Activated T-helper 1 cell treated with anti-CD3 and anti-CD28 coated beads, Interleukin-12 subunit alpha, Interleukin-12 subunit beta, Interleukin-2, Interleukin-4 antibody, amounts not matched to agents 30 ng/mL and 10 ng/mL and 1 ng/mL, durations not matched to agents 14 hours and 24 hours and 36 hours (primary cell): ENCODE measurements at regions of chr14 and their contacts with region 1.

Region 1: GRCh38 chr14:69685716-69686115 is 74.3 kb downstream of the SUSD6 start:
- DNase-seq: peak; percentile 32
- H3K4me3 Mint-ChIP-seq: peak overlapping the region; percentile 76
- H3K27ac Mint-ChIP-seq: peak overlapping the region; percentile 94
- H3K4me1 Mint-ChIP-seq: peaks cover 90% of the 10 kb centered on the region
- H3K27me3 Mint-ChIP-seq: no peaks in the 10 kb centered on the region

Region 2: GRCh38 chr14:69637503-69638030 is 48.1 kb before region 1 on chr14:
- intact Hi-C with region 1: loop called (anchors 1 kb)
- DNase-seq: no peak
- H3K4me3 Mint-ChIP-seq: peak overlapping the region; percentile 52
- H3K27ac Mint-ChIP-seq: peak overlapping the region; percentile 96
- H3K4me1 Mint-ChIP-seq: peaks cover 76% of the 10 kb centered on the region
- H3K27me3 Mint-ChIP-seq: no peaks in the 10 kb centered on the region

Region 3: GRCh38 chr14:69643443-69644164 is 42.1 kb before region 1 on chr14:
- intact Hi-C with region 1: loop called (anchors 1 kb)
- DNase-seq: no peak
- H3K4me3 Mint-ChIP-seq: peak overlapping the region; percentile 7
- H3K27ac Mint-ChIP-seq: peak overlapping the region; percentile 83
- H3K4me1 Mint-ChIP-seq: peaks cover 72% of the 10 kb centered on the region
- H3K27me3 Mint-ChIP-seq: no peaks in the 10 kb centered on the region

Region 4: GRCh38 chr14:69660344-69661193 is 25.1 kb before region 1 on chr14:
- intact Hi-C with region 1: loop called (anchors 1 kb)
- DNase-seq: no peak
- H3K4me3 Mint-ChIP-seq: peak overlapping the region; percentile 43
- H3K27ac Mint-ChIP-seq: peak overlapping the region; percentile 85
- H3K4me1 Mint-ChIP-seq: peaks cover 87% of the 10 kb centered on the region
- H3K27me3 Mint-ChIP-seq: no peaks in the 10 kb centered on the region

Region 5: GRCh38 chr14:69715725-69716477 is 30.2 kb after region 1 on chr14:
- intact Hi-C with region 1: loop called (anchors 1 kb)
- DNase-seq: no peak
- H3K4me3 Mint-ChIP-seq: peak overlapping the region; percentile 46
- H3K27ac Mint-ChIP-seq: peak overlapping the region; percentile 92
- H3K4me1 Mint-ChIP-seq: peaks cover 94% of the 10 kb centered on the region
- H3K27me3 Mint-ChIP-seq: no peaks in the 10 kb centered on the region

Region 6: DNA sequence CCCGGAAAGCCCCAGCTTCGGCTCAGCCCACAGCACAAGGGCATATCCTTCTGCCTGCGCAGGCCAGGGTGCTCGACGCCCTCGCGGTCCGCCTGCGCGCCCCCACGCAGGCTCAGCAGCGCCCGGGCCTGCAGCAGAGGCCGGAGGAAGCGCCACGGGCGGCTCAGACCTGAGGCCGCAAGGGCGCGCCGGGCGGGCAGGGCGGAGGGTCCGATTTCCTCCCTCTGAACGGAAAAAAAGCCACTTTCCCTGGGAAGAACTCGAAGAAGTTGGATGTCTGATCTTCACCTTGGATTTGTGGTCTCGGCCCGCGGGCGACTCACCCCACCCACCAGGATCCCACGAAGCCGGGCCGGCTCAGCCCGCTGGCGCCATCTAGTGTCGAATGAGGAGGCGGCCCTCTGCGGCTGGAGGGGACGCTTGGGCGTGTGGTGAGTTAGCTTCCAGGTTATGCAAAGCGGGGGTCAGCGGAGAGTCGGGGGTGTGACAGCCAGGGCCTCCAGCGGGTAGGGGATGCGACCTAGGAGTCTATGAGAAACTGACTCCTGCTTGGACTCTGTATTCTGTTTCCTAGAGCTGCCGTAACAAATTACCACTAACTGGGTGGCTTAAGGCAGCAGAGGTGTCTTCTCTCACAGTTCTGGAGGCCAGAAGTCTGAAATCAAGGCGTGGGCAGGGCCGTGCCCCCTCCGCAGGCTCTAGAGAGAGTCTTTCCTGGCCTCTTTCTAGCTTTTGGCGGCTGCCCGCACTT is 41.2 kb after region 1 on chr14:
- intact Hi-C with region 1: loop called (anchors 1 kb)
- DNase-seq: peak; percentile 76
- H3K4me3 Mint-ChIP-seq: peak overlapping the region; percentile 72
- H3K27ac Mint-ChIP-seq: peak overlapping the region; percentile 74
- H3K4me1 Mint-ChIP-seq: peaks cover 38% of the 10 kb centered on the region
- H3K27me3 Mint-ChIP-seq: no peaks in the 10 kb centered on the region